Posterior vena cava (tissue), 2 donors: ENCODE measurements at regions of chr9 and their contacts with region 1.

Region 1: DNA sequence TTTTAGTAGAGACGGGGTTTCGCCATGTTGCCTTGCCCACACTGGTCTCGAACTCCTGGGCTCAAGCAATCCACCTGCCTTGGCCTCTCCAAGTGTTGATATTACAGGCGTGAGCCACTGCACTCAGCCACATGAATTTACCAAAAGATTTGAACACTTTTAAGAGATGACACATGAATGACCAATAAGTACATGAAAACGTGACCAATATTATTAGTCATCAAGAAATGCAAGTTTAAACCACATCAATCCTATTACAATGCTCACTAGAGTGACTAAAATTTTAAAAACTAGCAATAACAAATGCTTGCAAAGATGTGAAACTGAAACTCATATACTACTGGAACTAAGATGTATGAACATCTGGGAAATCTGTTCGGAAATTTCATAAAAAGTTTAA is 54.3 kb downstream of the NR6A1 start:
- DNase-seq: no peak

Region 2: GRCh38 chr9:124617471-124618141 is 99.2 kb before region 1 on chr9:
- intact Hi-C with region 1: loop called (anchors 10 kb)
- DNase-seq: peak; percentile 93